Dendritic cell treated with granulocyte-macrophage colony-stimulating factor and Interleukin-4, amounts not matched to agents 40 ng/mL and 50 ng/mL, for 4 days (primary cell): ENCODE measurements at regions of chr12 and their contacts with region 1.

Region 1: GRCh38 chr12:42237052-42237852 is 796 bp downstream of the YAF2 start:
- H3K4me3 Mint-ChIP-seq: peak overlapping the region; percentile 84
- H3K27ac Mint-ChIP-seq: peak overlapping the region; percentile 85
- H3K4me1 Mint-ChIP-seq: peaks cover 27% of the 10 kb centered on the region
- H3K27me3 Mint-ChIP-seq: no peaks in the 10 kb centered on the region

Region 2: GRCh38 chr12:42144408-42145196 is 92.7 kb before region 1 on chr12 and contains the start of gene GXYLT1:
- intact Hi-C with region 1: loop called (anchors 2 kb)
- H3K4me3 Mint-ChIP-seq: peak within 1 kb of the TSS; percentile 99
- H3K27ac Mint-ChIP-seq: peak within 1 kb of the TSS; percentile 95
- H3K4me1 Mint-ChIP-seq: peaks cover 37% of the 10 kb centered on the region
- H3K27me3 Mint-ChIP-seq: peaks cover 2% of the 10 kb centered on the region

Region 3: GRCh38 chr12:42186793-42187192 is 50.5 kb before region 1 on chr12:
- intact Hi-C with region 1: loop called (anchors 5 kb)
- H3K4me3 Mint-ChIP-seq: no peak overlapping the region
- H3K27ac Mint-ChIP-seq: no peak overlapping the region
- H3K4me1 Mint-ChIP-seq: peaks cover 21% of the 10 kb centered on the region
- H3K27me3 Mint-ChIP-seq: no peaks in the 10 kb centered on the region

Region 4: DNA sequence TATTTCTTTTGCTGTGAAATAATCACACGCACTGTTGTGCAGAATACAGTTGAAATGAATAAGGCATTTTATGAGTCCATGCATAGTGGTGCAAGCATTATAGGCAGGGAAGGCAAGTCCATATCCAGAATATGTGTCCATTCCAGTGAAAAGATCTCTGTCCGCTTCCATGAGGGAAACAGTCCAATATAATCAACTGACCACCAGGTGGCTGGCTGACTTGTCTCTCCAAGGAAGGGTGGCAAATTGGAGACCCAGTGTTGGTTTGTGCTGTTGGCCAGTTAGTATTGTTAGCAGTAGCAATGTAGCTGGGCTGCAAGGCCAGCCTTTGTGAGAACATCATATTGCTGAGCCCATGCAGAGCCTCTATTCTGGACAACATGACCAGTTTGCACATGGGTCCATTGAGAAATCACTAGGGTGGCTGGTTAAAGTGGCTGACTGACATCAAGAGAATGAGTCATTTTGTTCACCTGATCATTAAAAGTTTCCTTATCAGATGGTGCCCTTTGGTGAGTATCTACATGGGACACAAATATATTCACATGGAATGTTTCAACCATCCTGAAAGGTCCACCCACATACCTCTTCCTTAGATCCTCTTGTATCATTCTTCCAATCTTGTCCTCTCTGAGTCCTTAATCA is 18.1 kb after region 1 on chr12:
- intact Hi-C with region 1: no loop called
- H3K4me3 Mint-ChIP-seq: no peak overlapping the region
- H3K27ac Mint-ChIP-seq: no peak overlapping the region
- H3K4me1 Mint-ChIP-seq: no peaks in the 10 kb centered on the region
- H3K27me3 Mint-ChIP-seq: no peaks in the 10 kb centered on the region

Region 5: GRCh38 chr12:42325653-42326474 is 88.6 kb after region 1 on chr12 and contains the starts of genes PPHLN1 and ZCRB1:
- intact Hi-C with region 1: loop called (anchors 2 kb)
- H3K4me3 Mint-ChIP-seq: peak within 1 kb of the TSS; percentile 99
- H3K27ac Mint-ChIP-seq: peak within 1 kb of the TSS; percentile 99
- H3K4me1 Mint-ChIP-seq: peaks cover 40% of the 10 kb centered on the region
- H3K27me3 Mint-ChIP-seq: no peaks in the 10 kb centered on the region